Pancreas (tissue), 10 donors: ENCODE measurements at regions of chr3 and their contacts with region 1.

Region 1: GRCh38 chr3:113844622-113845222 is 6.1 kb downstream of the GRAMD1C start:
- DNase-seq: no peak
- ATAC-seq: peak; percentile 66 to 94 (median 92)
- H3K4me3 ChIP-seq: no peak overlapping the region
- H3K27ac ChIP-seq: no peak overlapping the region
- H3K4me1 ChIP-seq: peaks cover 0 to 5% (median 0%) of the 10 kb centered on the region in 3 donors
- H3K27me3 ChIP-seq: no peaks in the 10 kb centered on the region
- CTCF ChIP-seq: peak; percentile 34 to 55 (median 46)

Region 2: GRCh38 chr3:113906568-113907140 is 61.9 kb after region 1 on chr3:
- intact Hi-C with region 1: loop called in 2 of 3 experiments (anchors 10 kb)
- DNase-seq: no peak
- ATAC-seq: no peak
- H3K4me3 ChIP-seq: no peak overlapping the region
- H3K27ac ChIP-seq: no peak overlapping the region
- H3K4me1 ChIP-seq: no peaks in the 10 kb centered on the region
- H3K27me3 ChIP-seq: no peaks in the 10 kb centered on the region
- CTCF ChIP-seq: no peak

Region 3: GRCh38 chr3:113912552-113913236 is 68.0 kb after region 1 on chr3:
- intact Hi-C with region 1: loop called in 2 of 3 experiments (anchors 10 kb)
- DNase-seq: peak in 3 of 6 donors; percentile 43 to 61 (median 44)
- ATAC-seq: peak; percentile 96 to 100 (median 100)
- H3K4me3 ChIP-seq: no peak overlapping the region
- H3K27ac ChIP-seq: peak overlapping the region in 2 of 4 donors; percentile 1 to 57
- H3K4me1 ChIP-seq: no peaks in the 10 kb centered on the region
- H3K27me3 ChIP-seq: no peaks in the 10 kb centered on the region
- CTCF ChIP-seq: peak; percentile 25 to 56 (median 42)